ENCODE measurements at regions of chr12 and their contacts with region 1.

Region 1: GRCh38 chr12:52069327-52070184 is at the start of gene ATG101:
- DNase-seq: peak; percentile 68 to 96
- H3K4me3 ChIP-seq: peak within 1 kb of the TSS; percentile 70 to 84
- H3K27ac ChIP-seq: peak within 1 kb of the TSS; percentile 85 to 89
- H3K4me1 ChIP-seq: peaks cover 10 to 19% of the 10 kb centered on the region in 2 donors
- H3K27me3 ChIP-seq: no peaks in the 10 kb centered on the region
- CTCF ChIP-seq: peak; percentile 37 to 87 (median 74)
- total RNA-seq, gene ATG101: 39.8 TPM

Region 2: DNA sequence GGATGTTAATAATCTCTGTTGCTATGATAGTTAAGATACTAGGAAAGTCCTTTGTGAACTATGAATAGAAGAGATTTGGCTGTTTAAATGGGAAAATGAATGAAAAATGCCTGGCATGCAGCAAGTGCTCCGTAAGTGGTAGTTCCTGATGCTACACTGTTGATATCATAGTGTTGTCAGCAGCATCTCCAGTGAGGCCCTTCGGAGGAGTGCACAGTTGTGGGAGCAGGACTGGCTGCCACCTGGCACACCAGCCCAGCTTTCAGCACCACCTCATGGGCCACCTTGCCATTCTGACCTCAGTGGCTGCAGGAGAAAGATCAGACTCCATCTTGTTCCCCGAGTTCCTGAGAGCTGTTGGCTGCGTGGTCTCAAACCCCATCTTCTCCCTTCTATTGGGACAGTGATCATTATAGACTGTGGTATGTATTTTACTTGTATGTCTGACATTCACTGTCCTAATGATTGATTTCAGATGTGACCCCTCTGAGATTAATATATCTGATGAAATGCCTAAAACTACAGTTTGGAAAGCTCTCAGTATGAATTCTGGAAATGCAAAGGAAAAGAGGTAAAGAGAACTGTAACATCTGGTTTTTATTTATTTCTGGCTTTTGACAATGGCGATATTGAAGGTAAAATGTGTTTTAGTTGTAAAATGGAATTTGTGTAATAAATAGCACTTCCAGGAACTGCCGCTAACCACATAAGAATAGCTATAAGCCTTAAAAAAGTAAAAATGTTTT is 564.0 kb before region 1 on chr12:
- intact Hi-C with region 1: no loop called
- DNase-seq: no peak
- H3K4me3 ChIP-seq: no peak overlapping the region
- H3K27ac ChIP-seq: no peak overlapping the region
- H3K4me1 ChIP-seq: no peaks in the 10 kb centered on the region
- H3K27me3 ChIP-seq: no peaks in the 10 kb centered on the region
- CTCF ChIP-seq: no peak

Region 3: DNA sequence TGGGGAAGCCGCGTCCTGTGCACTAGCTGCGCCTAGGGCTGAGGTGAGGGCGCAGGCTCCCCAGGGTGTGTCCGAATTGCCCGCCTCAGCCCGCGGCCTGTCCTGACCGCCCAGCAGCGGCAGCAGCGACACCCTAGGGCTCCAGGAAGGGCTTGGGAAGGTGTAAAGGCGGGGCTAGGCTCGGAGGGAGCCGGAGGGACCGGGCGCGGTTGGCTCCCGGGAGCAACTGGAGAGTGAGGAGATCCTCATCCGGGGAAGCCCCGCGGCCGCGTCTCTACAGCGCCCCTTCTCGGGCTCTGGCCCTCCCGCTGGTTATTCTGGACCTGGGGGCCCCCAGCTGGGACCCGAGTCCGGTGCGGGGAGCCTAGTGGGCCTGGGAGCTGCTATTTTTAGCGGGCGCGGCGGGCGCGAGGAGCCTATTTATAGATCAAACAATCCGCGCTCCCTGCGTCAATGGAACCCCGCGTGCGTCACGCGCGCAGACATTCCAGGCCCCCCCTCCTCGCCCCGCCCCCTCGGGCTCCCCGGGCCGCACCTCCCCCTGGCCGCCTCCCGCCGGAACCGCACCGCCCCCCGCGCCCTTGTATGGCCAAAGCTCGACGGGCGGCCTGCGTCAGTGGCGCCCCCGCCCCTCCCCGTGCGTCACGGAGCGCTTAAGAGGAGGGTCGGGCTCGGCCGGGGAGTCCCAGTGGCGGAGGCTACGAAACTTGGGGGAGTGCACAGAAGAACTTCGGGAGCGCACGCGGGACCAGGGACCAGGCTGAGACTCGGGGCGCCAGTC is 18.6 kb before region 1 on chr12 and contains the start of gene NR4A1:
- intact Hi-C with region 1: loop called (anchors 1 kb)
- DNase-seq: peak; percentile 95 to 100
- H3K4me3 ChIP-seq: peak within 1 kb of the TSS; percentile 78 to 79
- H3K27ac ChIP-seq: peak within 1 kb of the TSS; percentile 96 to 98
- H3K4me1 ChIP-seq: peaks cover 6 to 21% of the 10 kb centered on the region in 2 donors
- H3K27me3 ChIP-seq: no peaks in the 10 kb centered on the region
- CTCF ChIP-seq: peak in 1 of 3 experiments; percentile 31
- total RNA-seq, gene NR4A1: 722 TPM

Measured in ascending aorta (tissue), 2 donors.